ENCODE measurements at regions of chr1 and their contacts with region 1.

Region 1: GRCh38 chr1:94854458-94855306 is 34.5 kb downstream of the SLC44A3 start:
- DNase-seq: peak; percentile 89
- H3K4me3 ChIP-seq: peak overlapping the region; percentile 49 to 60
- H3K27ac ChIP-seq: peak overlapping the region; percentile 78 to 93
- H3K4me1 ChIP-seq: peaks cover 11 to 17% of the 10 kb centered on the region in 2 experiments; a peak in 3 of 4 replicates
- H3K27me3 ChIP-seq: no peaks in the 10 kb centered on the region
- CTCF ChIP-seq: peak; percentile 93
- EP300 ChIP-seq: peak in 1 of 2 experiments; percentile 78; a peak in 2 of 4 replicates
- RAD21 ChIP-seq: peak; percentile 93

Region 2: GRCh38 chr1:94743862-94744261 is 110.8 kb before region 1 on chr1:
- CTCF ChIA-PET with region 1: no interaction called
- POLR2A ChIA-PET with region 1: no interaction called
- DNase-seq: no peak
- H3K4me3 ChIP-seq: no peak overlapping the region
- H3K27ac ChIP-seq: peak overlapping the region in 1 of 2 experiments; percentile 81; a peak in 2 of 4 replicates
- H3K4me1 ChIP-seq: peaks cover 14 to 17% of the 10 kb centered on the region in 2 experiments; a peak in 3 of 4 replicates
- H3K27me3 ChIP-seq: no peaks in the 10 kb centered on the region
- CTCF ChIP-seq: no peak
- EP300 ChIP-seq: no peak
- RAD21 ChIP-seq: no peak

Region 3: DNA sequence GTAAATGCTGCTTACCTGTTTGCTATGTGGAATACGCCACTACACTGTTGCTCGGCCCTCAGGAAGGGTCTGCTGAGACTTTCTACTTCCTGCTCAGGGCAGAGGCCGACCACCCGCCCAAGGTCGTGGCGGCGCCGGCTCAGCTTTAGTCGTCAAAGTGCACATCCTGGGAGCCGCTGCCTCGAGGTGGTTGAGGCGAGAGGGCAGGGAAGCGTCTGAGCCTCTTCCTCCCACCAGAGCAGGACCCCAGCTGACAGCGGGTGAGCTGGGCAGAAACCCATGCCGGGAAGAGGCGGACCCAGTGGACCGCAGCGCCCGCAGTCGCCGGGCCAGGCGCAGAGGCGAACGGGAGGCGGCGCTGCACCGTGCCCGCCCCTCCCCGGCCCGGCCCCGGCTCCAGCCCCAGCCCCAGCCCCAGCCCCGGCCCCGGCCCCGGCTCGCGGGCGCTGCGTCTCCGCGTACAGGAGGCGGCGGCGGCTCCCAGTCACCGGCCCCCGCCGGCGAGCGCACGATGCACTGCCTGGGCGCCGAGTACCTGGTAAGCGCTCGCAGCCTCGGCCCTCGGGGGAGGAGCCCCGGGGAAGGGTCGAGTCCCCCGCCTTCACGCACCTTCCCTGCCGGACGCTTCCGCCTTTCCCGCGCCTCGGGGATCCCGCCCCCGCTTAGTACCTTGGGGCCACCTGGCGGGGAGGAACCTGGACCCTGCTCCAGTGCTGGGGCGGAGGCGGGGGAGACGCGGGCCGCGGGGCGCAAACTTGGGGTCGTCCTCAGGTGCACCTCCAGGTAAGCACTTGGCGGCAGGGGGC is 34.5 kb before region 1 on chr1 and contains the start of gene SLC44A3:
- CTCF ChIA-PET with region 1: interaction called, 15 read pairs
- POLR2A ChIA-PET with region 1: no interaction called
- DNase-seq: peak; percentile 88
- H3K4me3 ChIP-seq: peak within 1 kb of the TSS; percentile 68 to 72
- H3K27ac ChIP-seq: peak within 1 kb of the TSS in 1 of 2 experiments; percentile 82; a peak in 1 of 4 replicates
- H3K4me1 ChIP-seq: peaks cover 0 to 26% of the 10 kb centered on the region in 2 experiments; a peak in 2 of 4 replicates
- H3K27me3 ChIP-seq: no peaks in the 10 kb centered on the region
- CTCF ChIP-seq: peak; percentile 28; the same call in 1 of the 2 replicates
- EP300 ChIP-seq: no peak
- RAD21 ChIP-seq: no peak
- polyA plus RNA-seq, gene SLC44A3: 2.6 and 4.4 TPM in 2 replicates

Region 4: DNA sequence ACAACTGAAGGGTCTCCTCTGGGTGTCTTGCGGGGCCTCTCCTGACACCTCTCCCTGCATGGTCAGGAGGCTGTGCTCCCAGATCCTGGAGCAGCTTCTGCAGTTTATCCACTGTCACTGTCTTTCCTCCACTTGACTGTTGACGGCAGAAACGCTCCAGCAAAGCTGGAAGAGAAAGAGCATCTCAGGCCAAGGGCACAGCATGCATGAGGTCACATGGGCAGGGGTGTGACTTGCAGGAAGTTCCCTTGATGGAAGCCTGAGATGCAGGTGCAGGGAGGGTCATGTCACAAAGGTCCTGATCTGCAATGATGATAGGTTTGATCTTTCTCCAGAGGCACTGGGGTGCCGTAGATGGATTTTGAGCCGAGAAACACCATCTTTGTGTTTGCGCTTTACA is 11.3 kb before region 1 on chr1:
- CTCF ChIA-PET with region 1: interaction called, 29 read pairs
- POLR2A ChIA-PET with region 1: no interaction called
- DNase-seq: no peak
- H3K4me3 ChIP-seq: no peak overlapping the region
- H3K27ac ChIP-seq: no peak overlapping the region
- H3K4me1 ChIP-seq: peaks cover 0 to 2% of the 10 kb centered on the region in 2 experiments; a peak in 1 of 4 replicates
- H3K27me3 ChIP-seq: no peaks in the 10 kb centered on the region
- CTCF ChIP-seq: no peak
- EP300 ChIP-seq: no peak
- RAD21 ChIP-seq: no peak

Region 5: GRCh38 chr1:94909486-94909885 is 54.8 kb after region 1 on chr1:
- CTCF ChIA-PET with region 1: interaction called, 10 read pairs
- POLR2A ChIA-PET with region 1: no interaction called
- DNase-seq: no peak
- H3K4me3 ChIP-seq: no peak overlapping the region
- H3K27ac ChIP-seq: peak overlapping the region in 1 of 2 experiments; percentile 43; a peak in 1 of 4 replicates
- H3K4me1 ChIP-seq: peaks cover 24 to 36% of the 10 kb centered on the region in 2 experiments; a peak in 3 of 4 replicates
- H3K27me3 ChIP-seq: no peaks in the 10 kb centered on the region
- CTCF ChIP-seq: no peak
- EP300 ChIP-seq: no peak
- RAD21 ChIP-seq: no peak

Region 6: DNA sequence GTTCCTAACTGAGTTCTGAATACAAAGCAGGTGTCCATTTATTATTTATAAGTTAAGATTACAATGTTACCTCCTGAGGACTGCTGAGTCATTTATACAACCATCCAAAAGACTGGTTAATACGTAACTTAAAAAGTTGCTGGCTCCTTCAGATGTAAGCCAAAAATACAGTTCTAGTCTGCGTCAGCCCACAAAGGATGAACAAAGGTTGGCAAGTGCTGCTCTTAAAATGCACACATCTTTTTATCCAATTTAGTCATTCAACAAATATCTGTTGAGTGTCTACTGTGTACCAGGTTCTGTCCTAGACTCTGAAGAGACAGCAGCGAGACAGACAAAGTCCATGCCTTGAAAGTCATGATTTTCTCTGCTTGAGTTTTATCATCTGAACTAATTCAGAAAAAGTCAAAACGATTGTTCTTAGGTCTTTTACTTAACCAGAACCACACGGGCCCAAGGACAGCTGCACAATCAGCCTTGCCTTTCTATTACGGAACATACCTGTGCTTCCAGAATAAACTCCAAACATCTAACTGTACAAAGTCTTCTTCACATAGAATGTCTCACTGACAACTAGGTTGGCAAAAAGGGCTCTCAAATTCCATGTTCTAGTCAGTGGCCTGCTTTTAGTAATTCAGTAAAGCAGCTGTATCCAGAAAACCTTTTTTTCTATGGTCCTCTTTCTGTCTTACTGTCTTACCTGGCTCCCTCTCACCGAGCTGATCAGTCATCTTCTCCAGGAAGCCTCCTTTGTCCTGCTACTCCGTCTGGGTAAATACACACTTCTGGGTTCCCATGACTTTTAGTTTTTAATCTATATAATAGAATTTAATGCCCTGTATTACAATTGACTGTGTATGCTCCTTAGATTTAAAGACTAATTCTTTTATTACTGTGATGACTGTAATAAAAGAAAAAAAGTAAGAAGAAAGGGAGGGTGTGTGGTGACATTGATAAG is 87.8 kb after region 1 on chr1:
- CTCF ChIA-PET with region 1: interaction called, 27 read pairs
- POLR2A ChIA-PET with region 1: no interaction called
- DNase-seq: no peak
- H3K4me3 ChIP-seq: no peak overlapping the region
- H3K27ac ChIP-seq: no peak overlapping the region
- H3K4me1 ChIP-seq: peaks cover 6 to 8% of the 10 kb centered on the region in 2 experiments; a peak in 3 of 4 replicates
- H3K27me3 ChIP-seq: no peaks in the 10 kb centered on the region
- CTCF ChIP-seq: no peak
- EP300 ChIP-seq: no peak
- RAD21 ChIP-seq: no peak

Region 7: DNA sequence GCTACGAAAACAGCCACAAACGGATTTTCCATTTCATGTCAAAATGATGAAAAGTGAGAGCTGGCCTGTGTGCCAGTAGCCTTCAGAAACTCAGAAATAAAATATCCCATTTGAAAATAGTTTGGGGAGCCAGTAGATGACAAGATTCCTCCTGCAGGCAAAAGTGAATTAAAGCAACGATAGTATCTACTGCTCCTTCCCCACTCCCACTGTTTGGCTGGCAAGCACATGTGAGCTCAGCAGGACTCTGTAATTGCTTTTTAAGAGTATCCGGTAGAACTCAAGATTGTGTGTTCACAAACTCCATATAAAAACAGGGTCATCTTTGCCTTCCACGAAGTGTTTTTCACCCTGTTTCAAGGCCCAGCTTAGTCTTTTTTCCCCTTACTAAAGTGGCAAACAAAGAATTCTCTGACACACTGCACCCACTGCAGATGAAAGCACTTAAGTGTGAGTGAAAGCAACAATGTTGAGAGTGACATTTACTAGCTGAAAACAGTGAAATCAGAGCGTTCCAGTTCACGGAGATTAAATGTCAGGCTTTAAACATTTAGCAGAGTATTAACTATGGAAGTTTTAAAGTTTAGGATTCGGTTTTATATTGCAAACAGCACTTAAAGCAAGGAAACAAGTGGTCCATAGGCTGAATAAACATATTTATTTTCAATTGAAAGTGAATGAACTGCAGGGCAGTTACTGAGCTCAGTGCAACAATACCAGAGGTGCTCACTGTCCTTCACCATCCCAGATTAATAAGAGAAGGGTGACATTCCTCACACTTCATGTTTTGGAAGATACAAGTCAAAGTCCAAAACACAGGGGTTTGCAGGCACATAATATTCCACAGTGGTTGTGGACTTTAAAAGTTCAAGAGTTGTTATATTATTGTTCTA is 148.1 kb after region 1 on chr1:
- CTCF ChIA-PET with region 1: interaction called, 12 read pairs
- POLR2A ChIA-PET with region 1: no interaction called
- DNase-seq: peak; percentile 54
- H3K4me3 ChIP-seq: 0 out of 4 replicates have a peak overlapping the region, but pooled peaks of 1 of the 2 experiments have one; percentile 38
- H3K27ac ChIP-seq: peak overlapping the region; percentile 68 to 98
- H3K4me1 ChIP-seq: peaks cover 19 to 33% of the 10 kb centered on the region in 2 experiments
- H3K27me3 ChIP-seq: no peaks in the 10 kb centered on the region
- CTCF ChIP-seq: peak; percentile 8; the same call in 1 of the 2 replicates
- EP300 ChIP-seq: peak; percentile 16 to 86; a peak in 3 of 4 replicates
- RAD21 ChIP-seq: peak; percentile 53

Region 8: GRCh38 chr1:95058974-95059373 is 204.3 kb after region 1 on chr1:
- CTCF ChIA-PET with region 1: interaction called, 13 read pairs
- POLR2A ChIA-PET with region 1: no interaction called
- DNase-seq: no peak
- H3K4me3 ChIP-seq: no peak overlapping the region
- H3K27ac ChIP-seq: peak overlapping the region in 1 of 2 experiments; percentile 16; a peak in 1 of 4 replicates
- H3K4me1 ChIP-seq: no peaks in the 10 kb centered on the region
- H3K27me3 ChIP-seq: no peaks in the 10 kb centered on the region
- CTCF ChIP-seq: no peak
- EP300 ChIP-seq: no peak
- RAD21 ChIP-seq: no peak